Activated CD4-positive, alpha-beta T cell treated with anti-CD3 and anti-CD28 coated beads, Interleukin-2, amount 10 ng/mL, durations not matched to agents 7 days and 5 days (primary cell): ENCODE measurements at regions of chr9 and their contacts with region 1.

Region 1: GRCh38 chr9:114385412-114386181 is 2.2 kb downstream of the AKNA start:
- DNase-seq: peak; percentile 96
- H3K4me3 Mint-ChIP-seq: peak overlapping the region; percentile 99
- H3K27ac Mint-ChIP-seq: peak overlapping the region; percentile 91
- H3K4me1 Mint-ChIP-seq: peaks cover 54% of the 10 kb centered on the region
- H3K27me3 Mint-ChIP-seq: no peaks in the 10 kb centered on the region

Region 2: DNA sequence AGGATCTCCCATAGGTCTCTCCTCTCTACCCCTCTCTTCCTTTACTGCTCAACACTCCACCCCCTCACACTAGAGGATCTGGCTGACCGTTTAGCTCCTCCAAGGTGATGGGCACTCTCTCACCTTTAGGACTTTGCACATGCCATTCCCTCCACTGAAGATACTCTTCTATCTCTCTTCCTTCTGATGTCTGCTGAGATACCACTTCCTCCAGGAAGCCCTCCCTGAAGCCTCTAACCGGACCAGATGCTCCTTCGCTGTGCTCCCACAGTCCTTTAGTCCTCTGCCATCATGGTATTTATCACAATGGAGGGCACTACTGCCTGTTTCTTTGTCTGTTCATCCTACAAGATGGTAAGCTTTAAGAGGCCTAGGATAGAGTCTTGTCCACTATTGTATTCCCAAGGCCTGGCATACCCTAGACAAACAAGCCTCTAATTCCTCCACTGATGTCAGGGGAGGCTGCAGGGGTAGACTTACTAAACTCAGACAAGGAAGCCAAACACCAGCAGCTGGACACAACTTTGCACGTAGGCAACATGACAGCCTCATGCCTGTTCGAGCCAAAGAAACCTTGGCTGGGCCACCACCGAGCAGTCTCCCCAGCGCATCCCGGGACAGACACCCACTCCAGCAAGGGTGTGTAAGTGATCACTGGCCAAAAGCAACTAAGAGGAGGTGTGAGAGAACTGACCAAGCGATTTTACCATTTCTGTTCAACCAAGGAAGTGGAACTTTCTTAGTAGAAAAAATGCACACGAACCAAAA is 35.7 kb before region 1 on chr9:
- CTCF ChIA-PET with region 1: interaction called, 4 read pairs
- POLR2A ChIA-PET with region 1: interaction called, 10 read pairs
- DNase-seq: no peak
- H3K4me3 Mint-ChIP-seq: no peak overlapping the region
- H3K27ac Mint-ChIP-seq: peak overlapping the region; percentile 78
- H3K4me1 Mint-ChIP-seq: peaks cover 46% of the 10 kb centered on the region
- H3K27me3 Mint-ChIP-seq: no peaks in the 10 kb centered on the region

Region 3: GRCh38 chr9:114366334-114367128 is 19.1 kb before region 1 on chr9:
- CTCF ChIA-PET with region 1: interaction called, 39 read pairs
- POLR2A ChIA-PET with region 1: interaction called, 6 read pairs
- DNase-seq: peak; percentile 54
- H3K4me3 Mint-ChIP-seq: peak overlapping the region; percentile 64
- H3K27ac Mint-ChIP-seq: peak overlapping the region; percentile 88
- H3K4me1 Mint-ChIP-seq: peaks cover 83% of the 10 kb centered on the region
- H3K27me3 Mint-ChIP-seq: no peaks in the 10 kb centered on the region

Region 4: DNA sequence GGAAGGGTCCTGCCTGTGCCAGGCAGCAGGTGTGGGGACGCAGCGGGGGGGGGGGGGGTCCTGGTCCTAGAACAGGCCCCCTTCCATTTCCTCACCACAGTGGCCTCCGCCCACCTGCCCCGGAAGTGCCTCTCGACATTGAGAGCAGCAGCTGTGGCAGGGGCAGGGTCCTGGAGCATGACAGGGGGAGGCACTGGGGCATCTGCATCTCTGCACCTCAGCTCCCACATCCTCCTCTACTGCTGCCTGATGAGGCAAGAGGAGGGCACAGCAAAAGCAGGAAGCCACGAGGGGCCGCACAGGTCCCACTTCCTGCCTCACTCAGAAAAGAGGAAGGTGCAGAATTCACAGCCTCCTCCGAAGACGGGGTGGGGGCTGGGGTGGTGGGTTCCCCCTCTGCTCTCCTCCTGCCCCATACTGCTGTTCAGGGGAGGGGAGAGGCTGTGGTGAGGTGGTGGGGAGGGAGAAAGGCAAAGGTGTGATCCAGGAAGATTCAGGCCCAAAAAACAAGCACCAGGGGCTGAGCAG is 12.6 kb before region 1 on chr9:
- CTCF ChIA-PET with region 1: interaction called, 39 read pairs
- POLR2A ChIA-PET with region 1: interaction called, 7 read pairs
- DNase-seq: peak; percentile 92
- H3K4me3 Mint-ChIP-seq: peak overlapping the region; percentile 72
- H3K27ac Mint-ChIP-seq: peak overlapping the region; percentile 89
- H3K4me1 Mint-ChIP-seq: peaks cover 91% of the 10 kb centered on the region
- H3K27me3 Mint-ChIP-seq: no peaks in the 10 kb centered on the region

Region 5: DNA sequence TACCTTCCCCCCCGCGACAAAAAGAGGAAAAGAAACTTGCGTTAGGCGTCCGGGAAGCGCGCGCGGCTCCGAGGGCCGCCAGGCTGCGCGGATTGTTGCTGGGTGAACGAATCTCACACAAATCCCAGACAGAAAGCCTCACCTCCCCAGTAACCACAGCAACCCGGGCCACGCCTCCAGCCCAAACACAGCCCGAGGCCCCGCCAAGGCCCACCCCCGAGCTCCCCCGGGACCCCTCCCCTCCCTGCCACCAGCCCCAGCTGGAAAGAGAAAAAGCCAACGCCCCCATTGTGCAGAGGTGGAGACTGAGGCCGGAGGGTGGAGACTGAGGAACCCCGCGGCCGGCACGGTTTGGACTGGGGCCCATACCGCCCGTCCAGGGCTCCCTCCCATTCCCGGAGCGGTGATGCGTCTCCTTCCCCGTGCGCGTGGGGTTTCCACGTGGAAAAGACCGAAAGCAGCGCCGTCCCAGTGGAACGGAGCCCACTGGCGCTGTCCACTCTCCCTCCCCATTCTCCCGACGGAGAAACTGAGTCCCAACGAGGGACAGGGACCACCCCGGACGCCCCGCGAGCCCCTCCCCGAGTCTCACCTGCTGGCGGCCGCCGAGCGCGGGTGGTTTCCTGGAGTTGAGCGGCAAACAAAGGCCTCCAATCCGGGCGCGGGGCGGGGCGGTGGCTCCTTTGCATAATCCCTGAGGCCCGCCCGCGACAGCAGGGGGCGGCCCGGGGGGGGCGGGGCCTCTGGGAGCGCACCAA is 12.4 kb after region 1 on chr9:
- CTCF ChIA-PET with region 1: interaction called, 45 read pairs
- POLR2A ChIA-PET with region 1: interaction called, 9 read pairs
- DNase-seq: peak; percentile 98
- H3K4me3 Mint-ChIP-seq: peak overlapping the region; percentile 91
- H3K27ac Mint-ChIP-seq: peak overlapping the region; percentile 89
- H3K4me1 Mint-ChIP-seq: peaks cover 55% of the 10 kb centered on the region
- H3K27me3 Mint-ChIP-seq: no peaks in the 10 kb centered on the region

Region 6: DNA sequence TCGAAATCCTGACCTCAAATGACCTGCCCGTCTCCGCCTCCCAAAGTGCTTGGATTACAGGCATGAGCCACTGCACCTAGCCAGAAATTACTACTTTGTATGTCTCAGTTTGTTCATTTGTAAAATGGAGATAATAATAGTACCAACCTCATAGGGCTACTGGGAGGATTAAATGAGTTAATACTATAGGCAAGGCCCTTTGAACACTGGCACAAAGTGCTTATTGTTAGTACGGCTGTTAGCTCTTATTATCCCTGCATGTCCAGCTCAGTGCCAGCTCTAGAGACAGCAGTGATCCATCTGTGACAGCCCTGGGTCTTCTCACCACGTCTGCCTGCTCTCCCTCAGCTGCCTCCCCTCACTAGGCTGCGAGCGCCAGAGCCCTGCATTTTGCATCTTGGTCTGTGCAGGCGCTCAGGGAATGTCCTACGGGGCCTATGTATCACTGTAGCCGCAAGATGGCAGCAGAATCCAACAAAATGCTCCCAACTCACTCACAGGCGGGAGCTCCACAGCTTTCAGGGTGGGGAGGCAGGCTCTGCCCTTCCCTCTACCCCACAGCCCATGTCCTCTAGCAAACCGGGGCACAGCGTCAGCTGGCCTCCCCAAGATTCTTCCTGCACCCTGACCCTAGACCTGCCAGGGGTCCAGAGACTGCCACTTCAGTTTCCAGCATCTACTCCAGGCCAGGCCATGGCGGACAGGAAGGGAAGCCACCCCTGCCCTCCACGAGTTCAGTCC is 19.9 kb after region 1 on chr9:
- CTCF ChIA-PET with region 1: interaction called, 20 read pairs
- POLR2A ChIA-PET with region 1: no interaction called
- DNase-seq: peak; percentile 87
- H3K4me3 Mint-ChIP-seq: no peak overlapping the region
- H3K27ac Mint-ChIP-seq: peak overlapping the region; percentile 70
- H3K4me1 Mint-ChIP-seq: peaks cover 17% of the 10 kb centered on the region
- H3K27me3 Mint-ChIP-seq: no peaks in the 10 kb centered on the region